ENCODE measurements at regions of chr1 and their contacts with region 1.

Region 1: DNA sequence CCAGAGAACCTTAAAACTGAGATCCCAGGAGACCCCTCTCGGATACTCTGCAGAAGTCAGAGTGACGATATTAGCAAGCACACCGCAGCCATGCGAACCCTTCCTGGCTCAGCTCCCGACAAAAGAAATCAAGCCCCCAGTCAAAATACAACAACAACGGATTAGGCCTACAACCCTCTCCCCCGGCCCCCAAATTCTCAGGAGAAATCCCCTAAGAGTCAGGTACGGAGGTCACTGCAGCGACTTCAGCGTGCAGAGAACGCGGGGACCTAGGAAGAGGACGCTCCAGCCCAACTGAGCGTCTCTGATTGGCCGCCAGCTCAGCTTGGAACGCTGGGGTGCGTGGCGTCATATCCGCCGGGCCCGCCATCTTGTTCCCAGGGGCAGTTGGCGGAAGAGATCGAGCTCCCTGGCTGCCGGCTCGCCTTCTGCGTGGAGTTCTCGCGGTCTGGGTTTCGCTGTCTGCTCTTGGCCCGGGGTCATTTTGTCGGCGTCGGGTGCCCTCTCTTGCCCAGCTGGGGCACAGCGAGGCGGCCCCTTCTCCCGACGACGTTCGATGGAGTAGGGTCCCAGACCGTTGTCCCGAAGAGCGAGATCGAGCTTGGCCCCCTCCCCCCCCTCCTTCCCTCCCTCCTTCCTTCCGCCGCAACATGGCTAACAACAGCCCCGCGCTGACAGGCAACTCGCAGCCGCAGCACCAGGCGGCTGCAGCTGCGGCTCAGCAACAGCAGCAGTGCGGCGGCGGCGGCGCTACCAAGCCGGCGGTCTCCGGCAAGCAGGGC is at the start of gene PRPF38B:
- DNase-seq: peak; percentile 95
- ATAC-seq: peak; percentile 92
- H3K4me3 ChIP-seq: peak within 1 kb of the TSS; percentile 84 to 93 (median 90)
- H3K4me3 Mint-ChIP-seq: peak within 1 kb of the TSS; percentile 98
- H3K27ac ChIP-seq: peak within 1 kb of the TSS; percentile 96 to 99
- H3K27ac Mint-ChIP-seq: peak within 1 kb of the TSS; percentile 97
- H3K4me1 ChIP-seq: peaks cover 21 to 35% of the 10 kb centered on the region in 2 donors
- H3K4me1 Mint-ChIP-seq: peaks cover 43% of the 10 kb centered on the region
- H3K27me3 ChIP-seq: no peaks in the 10 kb centered on the region
- H3K27me3 Mint-ChIP-seq: peaks cover 3% of the 10 kb centered on the region
- CTCF ChIP-seq: no peak
- total RNA-seq, gene PRPF38B: 107 and 114 TPM in 2 replicates

Region 2: DNA sequence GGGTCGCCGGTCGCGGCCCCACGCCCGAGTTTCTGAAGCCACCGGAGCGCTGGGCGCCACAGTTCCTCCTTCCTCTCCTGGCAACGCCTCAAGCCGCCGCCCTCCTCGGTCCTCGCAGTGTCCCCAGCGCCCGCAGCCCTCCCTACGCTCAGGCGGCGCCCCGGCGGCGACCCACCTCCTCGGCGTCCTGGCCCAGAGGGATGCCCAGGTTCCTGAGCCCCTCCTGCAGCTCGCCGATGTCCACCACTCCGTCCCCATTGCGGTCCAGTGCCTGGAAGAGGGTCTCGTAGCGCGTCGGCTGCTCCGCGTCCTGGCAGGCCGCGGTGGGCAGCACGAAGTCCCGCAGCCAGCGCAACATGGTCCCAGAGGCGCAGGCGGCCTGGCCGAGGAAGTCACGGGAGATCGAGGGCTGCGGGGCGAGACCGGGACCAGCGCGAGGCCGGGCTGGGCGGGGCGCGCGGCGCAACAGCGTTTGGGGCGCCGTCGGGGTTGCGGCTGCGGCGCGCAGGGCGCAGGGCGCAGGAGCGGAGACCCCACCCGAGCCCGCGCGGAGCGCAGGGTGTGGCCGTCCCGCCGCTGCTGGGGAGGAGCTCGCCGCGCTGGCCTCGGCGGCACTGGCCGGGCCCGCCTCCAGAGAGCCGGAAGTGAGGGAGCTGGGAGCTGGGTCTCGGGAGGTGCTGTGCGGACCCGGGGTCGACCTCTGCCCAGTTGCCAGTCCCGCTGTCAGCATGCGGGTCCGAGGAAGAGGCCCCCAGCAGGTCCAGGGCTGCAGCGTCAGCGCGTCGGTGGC is 492.2 kb before region 1 on chr1 and contains the start of gene SLC25A24:
- CTCF ChIA-PET with region 1: interaction called, 6 read pairs
- POLR2A ChIA-PET with region 1: interaction called, 6 read pairs
- intact Hi-C with region 1: loop called (anchors 1 kb)
- DNase-seq: peak; percentile 85
- ATAC-seq: peak; percentile 95
- H3K4me3 ChIP-seq: peak within 1 kb of the TSS; percentile 85 to 96 (median 87)
- H3K4me3 Mint-ChIP-seq: peak within 1 kb of the TSS; percentile 93
- H3K27ac ChIP-seq: peak within 1 kb of the TSS; percentile 80 to 84
- H3K27ac Mint-ChIP-seq: peak within 1 kb of the TSS; percentile 94
- H3K4me1 ChIP-seq: peaks cover 13 to 16% of the 10 kb centered on the region in 2 donors
- H3K4me1 Mint-ChIP-seq: peaks cover 32% of the 10 kb centered on the region
- H3K27me3 ChIP-seq: no peaks in the 10 kb centered on the region
- H3K27me3 Mint-ChIP-seq: no peaks in the 10 kb centered on the region
- CTCF ChIP-seq: no peak
- total RNA-seq, gene SLC25A24: 25.3 and 25.6 TPM in 2 replicates

Region 3: GRCh38 chr1:108643492-108644335 is 48.4 kb before region 1 on chr1:
- CTCF ChIA-PET with region 1: interaction called, 11 read pairs
- POLR2A ChIA-PET with region 1: no interaction called
- intact Hi-C with region 1: no loop called
- DNase-seq: peak; percentile 66
- ATAC-seq: peak; percentile 61
- H3K4me3 ChIP-seq: no peak overlapping the region
- H3K4me3 Mint-ChIP-seq: no peak overlapping the region
- H3K27ac ChIP-seq: no peak overlapping the region
- H3K27ac Mint-ChIP-seq: no peak overlapping the region
- H3K4me1 ChIP-seq: peaks cover 13 to 19% of the 10 kb centered on the region in 2 donors
- H3K4me1 Mint-ChIP-seq: peaks cover 21% of the 10 kb centered on the region
- H3K27me3 ChIP-seq: no peaks in the 10 kb centered on the region
- H3K27me3 Mint-ChIP-seq: no peaks in the 10 kb centered on the region
- CTCF ChIP-seq: peak; percentile 60

Region 4: GRCh38 chr1:108877348-108878159 is 185.4 kb after region 1 on chr1:
- CTCF ChIA-PET with region 1: no interaction called
- POLR2A ChIA-PET with region 1: no interaction called
- intact Hi-C with region 1: loop called (anchors 1 kb)
- DNase-seq: peak; percentile 34
- ATAC-seq: no peak
- H3K4me3 ChIP-seq: peak overlapping the region; percentile 68 to 93 (median 86)
- H3K4me3 Mint-ChIP-seq: peak overlapping the region; percentile 98
- H3K27ac ChIP-seq: peak overlapping the region in 1 of 2 donors; percentile 67
- H3K27ac Mint-ChIP-seq: peak overlapping the region; percentile 88
- H3K4me1 ChIP-seq: peaks cover 11 to 12% of the 10 kb centered on the region in 2 donors
- H3K4me1 Mint-ChIP-seq: peaks cover 13% of the 10 kb centered on the region
- H3K27me3 ChIP-seq: no peaks in the 10 kb centered on the region
- H3K27me3 Mint-ChIP-seq: no peaks in the 10 kb centered on the region
- CTCF ChIP-seq: no peak

Region 5: DNA sequence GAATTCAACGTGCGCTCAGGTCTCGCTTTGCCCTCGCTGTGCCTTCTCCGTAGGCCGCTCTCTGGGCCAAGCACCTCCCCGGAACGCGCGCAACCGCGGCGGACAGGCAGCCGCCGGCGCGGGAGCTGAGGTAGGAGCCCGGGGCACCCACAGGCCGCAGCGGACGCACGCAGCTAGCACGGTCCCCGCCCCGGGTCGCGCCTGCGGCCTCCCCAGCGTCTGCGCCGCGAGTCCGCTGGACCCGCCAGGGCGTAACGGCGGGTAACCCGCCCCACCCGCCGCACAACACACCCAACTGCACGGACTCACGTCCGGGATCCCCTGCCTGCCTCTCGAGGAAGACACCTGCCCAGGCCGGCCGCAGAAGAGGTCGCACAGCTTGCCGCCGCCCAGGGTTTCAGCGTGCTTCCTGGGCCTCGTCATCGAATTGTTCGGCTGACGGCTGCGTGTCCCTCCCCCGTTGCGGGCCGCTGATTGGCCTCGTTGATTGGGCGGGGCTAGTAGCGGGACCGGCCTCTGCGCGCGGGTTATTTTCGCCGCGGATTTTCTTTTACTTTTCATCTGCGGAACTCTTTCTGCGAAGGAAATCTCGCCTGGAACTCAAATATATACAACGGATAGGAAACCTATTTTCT is 271.0 kb after region 1 on chr1 and contains the start of gene CLCC1:
- CTCF ChIA-PET with region 1: no interaction called
- POLR2A ChIA-PET with region 1: interaction called, 4 read pairs
- intact Hi-C with region 1: loop called (anchors 1 kb)
- DNase-seq: peak; percentile 97
- ATAC-seq: peak; percentile 91
- H3K4me3 ChIP-seq: peak within 1 kb of the TSS; percentile 56 to 94 (median 76)
- H3K4me3 Mint-ChIP-seq: peak within 1 kb of the TSS; percentile 91
- H3K27ac ChIP-seq: peak within 1 kb of the TSS; percentile 86 to 94
- H3K27ac Mint-ChIP-seq: peak within 1 kb of the TSS; percentile 95
- H3K4me1 ChIP-seq: peaks cover 16 to 17% of the 10 kb centered on the region in 2 donors
- H3K4me1 Mint-ChIP-seq: peaks cover 30% of the 10 kb centered on the region
- H3K27me3 ChIP-seq: no peaks in the 10 kb centered on the region
- H3K27me3 Mint-ChIP-seq: no peaks in the 10 kb centered on the region
- CTCF ChIP-seq: no peak
- total RNA-seq, gene CLCC1: 26.9 and 29.5 TPM in 2 replicates